Mammary epithelial cell (primary cell): ENCODE measurements at regions of chr7 and their contacts with region 1.

Region 1: DNA sequence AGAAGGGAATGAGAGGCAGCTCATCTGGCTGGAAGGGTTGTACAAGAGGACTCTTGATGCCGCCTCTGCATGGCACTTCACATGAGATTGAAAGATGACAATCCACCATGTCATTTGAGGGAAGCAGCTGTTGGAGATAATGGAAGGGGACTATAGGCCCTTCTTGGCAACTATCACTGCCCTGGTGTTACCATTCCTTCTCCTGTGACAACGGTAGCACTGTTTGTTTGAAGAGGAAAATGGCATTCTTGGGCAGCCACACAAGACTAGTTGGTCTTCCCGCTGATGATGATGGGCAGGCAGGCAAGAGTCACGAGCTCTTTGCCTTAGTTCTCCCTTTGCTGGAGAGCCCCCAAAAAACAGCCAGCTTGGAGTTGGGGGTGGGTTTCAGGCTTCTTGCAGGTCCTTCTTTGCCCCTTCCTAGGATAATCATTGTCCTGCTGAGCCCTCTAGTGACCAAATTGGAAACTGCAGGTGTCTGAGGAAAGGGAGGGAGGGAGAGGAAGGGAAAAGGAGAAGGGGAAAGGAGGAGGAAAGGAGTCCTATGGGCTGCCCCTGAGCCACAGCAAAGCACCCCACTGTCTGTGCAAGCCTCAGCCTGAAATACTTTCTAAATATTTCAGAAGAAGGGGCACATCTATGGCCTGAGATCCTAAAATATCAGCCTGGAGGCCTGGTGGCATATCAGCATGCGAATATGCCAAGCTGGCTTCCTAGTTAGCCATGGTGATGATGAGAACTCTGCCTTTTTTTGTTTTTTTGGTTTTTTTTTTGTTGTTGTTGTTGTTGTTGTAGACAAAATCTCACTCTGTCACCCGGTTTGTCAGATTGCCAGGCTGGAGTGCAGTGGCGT is 165.6 kb upstream of the KMT2E start:
- DNase-seq: peak; percentile 25
- H3K4me3 ChIP-seq: no peak overlapping the region
- H3K27ac ChIP-seq: no peak overlapping the region
- H3K4me1 ChIP-seq: no peaks in the 10 kb centered on the region
- H3K27me3 ChIP-seq: no peaks in the 10 kb centered on the region
- CTCF ChIP-seq: peak; percentile 79 to 86

Region 2: GRCh38 chr7:104231054-104232046 is 617.0 kb before region 1 on chr7:
- CTCF ChIA-PET with region 1: no interaction called
- dilution Hi-C with region 1: no loop called
- in situ Hi-C with region 1: no loop called
- intact Hi-C with region 1: loop called (anchors 1 kb)
- DNase-seq: peak; percentile 30
- H3K4me3 ChIP-seq: no peak overlapping the region
- H3K27ac ChIP-seq: no peak overlapping the region
- H3K4me1 ChIP-seq: no peaks in the 10 kb centered on the region
- H3K27me3 ChIP-seq: no peaks in the 10 kb centered on the region
- CTCF ChIP-seq: peak; percentile 76 to 88

Region 3: GRCh38 chr7:104252404-104253134 is 595.8 kb before region 1 on chr7:
- CTCF ChIA-PET with region 1: no interaction called
- dilution Hi-C with region 1: no loop called
- in situ Hi-C with region 1: loop called in 1 of 2 experiments (anchors 10 kb)
- intact Hi-C with region 1: no loop called
- DNase-seq: peak; percentile 3
- H3K4me3 ChIP-seq: no peak overlapping the region
- H3K27ac ChIP-seq: no peak overlapping the region
- H3K4me1 ChIP-seq: peaks cover 7% of the 10 kb centered on the region
- H3K27me3 ChIP-seq: no peaks in the 10 kb centered on the region
- CTCF ChIP-seq: peak; percentile 14 to 19

Region 4: GRCh38 chr7:104267701-104268368 is 580.5 kb before region 1 on chr7:
- CTCF ChIA-PET with region 1: no interaction called
- dilution Hi-C with region 1: no loop called
- in situ Hi-C with region 1: loop called in 1 of 2 experiments (anchors 10 kb)
- intact Hi-C with region 1: loop called (anchors 1 kb)
- DNase-seq: peak; percentile 6
- H3K4me3 ChIP-seq: no peak overlapping the region
- H3K27ac ChIP-seq: no peak overlapping the region
- H3K4me1 ChIP-seq: no peaks in the 10 kb centered on the region
- H3K27me3 ChIP-seq: no peaks in the 10 kb centered on the region
- CTCF ChIP-seq: peak; percentile 47 to 66

Region 5: DNA sequence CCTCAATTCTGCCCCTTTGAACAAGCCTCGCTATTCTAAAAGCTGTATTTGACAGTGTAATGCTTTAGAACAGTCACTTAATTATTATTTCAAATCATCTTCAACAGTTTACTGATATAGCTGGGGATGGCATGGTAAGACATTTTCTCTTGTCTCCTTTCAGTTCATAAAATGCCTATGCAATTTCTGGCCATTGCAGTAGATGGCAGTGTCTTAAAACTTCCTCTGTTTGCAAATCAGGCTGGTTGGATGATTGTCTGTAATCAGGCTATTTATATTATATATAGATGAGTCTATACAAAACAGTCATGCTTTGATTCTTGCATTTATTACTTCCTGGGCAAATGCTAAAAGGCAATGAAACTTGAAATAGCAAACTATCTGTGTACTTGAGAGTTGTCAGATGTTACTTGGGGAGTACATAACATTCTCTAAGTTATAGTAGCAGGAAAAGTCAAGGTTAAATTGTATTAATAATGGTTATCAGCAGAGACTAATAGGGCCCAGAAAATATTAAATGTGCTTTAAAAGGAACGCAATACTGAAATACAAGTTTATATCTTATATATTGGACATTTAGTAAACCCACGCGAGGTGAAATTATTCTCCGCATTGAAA is 575.5 kb before region 1 on chr7:
- CTCF ChIA-PET with region 1: no interaction called
- dilution Hi-C with region 1: no loop called
- in situ Hi-C with region 1: loop called in 1 of 2 experiments (anchors 10 kb)
- intact Hi-C with region 1: loop called (anchors 1 kb)
- DNase-seq: peak; percentile 33
- H3K4me3 ChIP-seq: no peak overlapping the region
- H3K27ac ChIP-seq: no peak overlapping the region
- H3K4me1 ChIP-seq: no peaks in the 10 kb centered on the region
- H3K27me3 ChIP-seq: no peaks in the 10 kb centered on the region
- CTCF ChIP-seq: peak; percentile 57 to 73

Region 6: DNA sequence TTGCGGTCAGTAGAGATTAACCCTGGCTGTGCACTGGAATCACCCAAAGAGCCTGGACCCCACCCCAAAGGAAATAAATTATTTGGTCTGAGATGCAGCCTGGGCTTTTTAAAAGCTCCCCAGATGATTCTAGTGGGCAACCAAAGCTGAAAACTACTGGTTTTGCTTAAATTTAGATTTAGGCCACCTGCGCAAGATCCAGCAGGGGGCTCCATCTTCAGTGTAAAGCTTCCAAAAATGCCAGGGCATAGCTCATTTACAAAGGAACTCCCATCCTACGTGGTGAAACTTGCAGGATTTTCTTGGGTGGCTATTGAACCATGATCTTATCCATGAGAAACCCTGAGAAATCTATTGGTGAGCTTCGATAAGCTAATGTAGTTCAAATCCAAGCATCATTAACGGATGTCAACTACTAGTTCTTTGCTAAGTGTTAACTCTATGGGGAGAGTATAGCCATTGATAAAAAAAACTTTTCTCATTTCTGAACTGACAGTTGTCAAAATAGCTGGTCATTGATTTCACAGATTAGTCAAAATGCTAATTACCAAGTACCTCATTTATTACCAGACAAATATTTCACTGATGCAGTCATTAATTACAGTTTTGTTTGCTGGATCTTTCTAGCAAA is 204.7 kb before region 1 on chr7:
- CTCF ChIA-PET with region 1: no interaction called
- dilution Hi-C with region 1: no loop called
- in situ Hi-C with region 1: loop called in 1 of 2 experiments (anchors 25 kb)
- intact Hi-C with region 1: no loop called
- DNase-seq: peak; percentile 3
- H3K4me3 ChIP-seq: no peak overlapping the region
- H3K27ac ChIP-seq: no peak overlapping the region
- H3K4me1 ChIP-seq: no peaks in the 10 kb centered on the region
- H3K27me3 ChIP-seq: no peaks in the 10 kb centered on the region
- CTCF ChIP-seq: peak; percentile 49 to 62

Region 7: GRCh38 chr7:104767826-104768536 is 80.4 kb before region 1 on chr7:
- CTCF ChIA-PET with region 1: no interaction called
- dilution Hi-C with region 1: no loop called
- in situ Hi-C with region 1: no loop called
- intact Hi-C with region 1: loop called (anchors 1 kb)
- DNase-seq: no peak
- H3K4me3 ChIP-seq: no peak overlapping the region
- H3K27ac ChIP-seq: no peak overlapping the region
- H3K4me1 ChIP-seq: no peaks in the 10 kb centered on the region
- H3K27me3 ChIP-seq: no peaks in the 10 kb centered on the region
- CTCF ChIP-seq: no peak